ENCODE measurements at regions of chr12 and their contacts with region 1.

Region 1: DNA sequence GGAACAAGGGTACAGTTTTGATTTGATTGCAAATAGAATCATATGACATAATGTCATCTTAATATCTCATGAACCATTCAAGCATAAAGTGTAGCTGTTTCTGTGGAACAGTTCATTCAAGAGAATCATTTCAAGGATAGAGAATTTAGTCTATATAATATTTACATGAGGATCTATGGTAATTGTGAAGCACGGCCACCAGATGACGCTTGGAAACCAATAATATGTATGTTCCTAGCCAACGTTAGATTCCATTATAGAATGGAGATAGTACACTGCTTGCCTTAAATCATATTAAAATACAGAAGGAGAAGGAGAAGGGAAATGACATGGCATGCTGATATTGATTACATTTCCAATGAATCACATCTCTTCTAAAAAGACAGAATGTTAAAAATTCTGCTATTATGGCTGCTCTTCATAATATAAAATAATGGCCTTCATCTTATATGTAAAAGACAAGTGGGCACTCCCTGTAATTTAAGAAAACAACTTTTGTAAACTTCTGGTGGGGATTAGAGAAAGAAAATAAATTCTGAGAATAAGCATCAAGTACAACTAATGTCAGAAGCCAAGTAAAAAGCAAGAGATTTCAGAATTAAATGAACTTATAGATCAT is 351.0 kb downstream of the NAV3 start:
- DNase-seq: no peak
- H3K4me3 ChIP-seq: no peak overlapping the region
- H3K27ac ChIP-seq: no peak overlapping the region
- H3K4me1 ChIP-seq: no peaks in the 10 kb centered on the region
- H3K27me3 ChIP-seq: no peaks in the 10 kb centered on the region
- CTCF ChIP-seq: peak in 3 of 4 experiments; percentile 19 to 45 (median 43)
- EP300 ChIP-seq: no peak
- POLR2A ChIP-seq: no peak

Region 2: GRCh38 chr12:79373896-79374499 is 1192.3 kb after region 1 on chr12:
- intact Hi-C with region 1: loop called (anchors 10 kb)
- DNase-seq: no peak
- H3K4me3 ChIP-seq: no peak overlapping the region
- H3K27ac ChIP-seq: no peak overlapping the region
- H3K4me1 ChIP-seq: peaks cover 0 to 8% (median 2%) of the 10 kb centered on the region in 4 donors
- H3K27me3 ChIP-seq: no peaks in the 10 kb centered on the region
- CTCF ChIP-seq: peak in 3 of 4 experiments; percentile 26 to 66 (median 48)
- EP300 ChIP-seq: no peak
- POLR2A ChIP-seq: no peak

Measured in sigmoid colon (tissue), 7 donors.